Activated CD4-positive, alpha-beta T cell treated with anti-CD3 and anti-CD28 coated beads, Interleukin-2, amount 10 ng/mL, durations not matched to agents 24 days and 14 days (primary cell): ENCODE measurements at regions of chr6 and their contacts with region 1.

Region 1: DNA sequence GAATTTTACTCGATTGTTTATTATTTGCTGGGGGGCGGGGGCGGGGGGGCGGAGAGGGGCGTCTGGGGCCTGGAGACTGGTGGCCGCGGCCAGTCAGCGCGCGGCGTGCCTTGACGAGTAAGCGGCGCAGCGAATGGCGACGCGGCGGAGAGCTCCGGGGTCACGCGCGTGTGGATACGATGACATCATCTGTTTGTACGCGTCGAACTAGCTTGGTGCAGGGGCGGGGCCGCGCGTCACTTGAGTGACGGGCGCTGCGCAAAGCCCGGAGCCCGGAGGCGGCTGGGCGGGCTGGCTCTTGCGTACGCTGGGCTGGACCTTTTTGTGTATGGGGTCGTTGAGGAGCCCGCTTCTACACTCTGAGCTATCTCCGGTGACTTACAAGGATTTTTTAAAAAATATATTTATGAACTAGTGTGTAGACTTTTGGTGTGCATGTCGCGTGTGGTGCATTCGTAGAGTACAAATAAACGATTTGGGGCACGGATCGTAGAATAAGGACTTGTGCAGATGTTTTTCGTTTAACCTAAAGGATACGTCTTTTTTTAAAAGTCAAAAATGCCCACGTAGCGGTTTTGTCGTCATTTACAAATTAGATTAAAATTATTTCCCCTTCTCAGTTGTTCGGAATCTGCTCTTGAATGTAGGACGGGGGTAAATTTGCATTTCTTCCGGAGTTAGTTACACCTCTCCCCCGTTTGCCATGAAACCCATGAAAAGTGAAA is 2.2 kb upstream of the FOXO3 start:
- DNase-seq: peak; percentile 99
- H3K4me3 Mint-ChIP-seq: peak overlapping the region; percentile 88
- H3K27ac Mint-ChIP-seq: peak overlapping the region; percentile 93
- H3K4me1 Mint-ChIP-seq: peaks cover 19% of the 10 kb centered on the region
- H3K27me3 Mint-ChIP-seq: peaks cover 44% of the 10 kb centered on the region

Region 2: DNA sequence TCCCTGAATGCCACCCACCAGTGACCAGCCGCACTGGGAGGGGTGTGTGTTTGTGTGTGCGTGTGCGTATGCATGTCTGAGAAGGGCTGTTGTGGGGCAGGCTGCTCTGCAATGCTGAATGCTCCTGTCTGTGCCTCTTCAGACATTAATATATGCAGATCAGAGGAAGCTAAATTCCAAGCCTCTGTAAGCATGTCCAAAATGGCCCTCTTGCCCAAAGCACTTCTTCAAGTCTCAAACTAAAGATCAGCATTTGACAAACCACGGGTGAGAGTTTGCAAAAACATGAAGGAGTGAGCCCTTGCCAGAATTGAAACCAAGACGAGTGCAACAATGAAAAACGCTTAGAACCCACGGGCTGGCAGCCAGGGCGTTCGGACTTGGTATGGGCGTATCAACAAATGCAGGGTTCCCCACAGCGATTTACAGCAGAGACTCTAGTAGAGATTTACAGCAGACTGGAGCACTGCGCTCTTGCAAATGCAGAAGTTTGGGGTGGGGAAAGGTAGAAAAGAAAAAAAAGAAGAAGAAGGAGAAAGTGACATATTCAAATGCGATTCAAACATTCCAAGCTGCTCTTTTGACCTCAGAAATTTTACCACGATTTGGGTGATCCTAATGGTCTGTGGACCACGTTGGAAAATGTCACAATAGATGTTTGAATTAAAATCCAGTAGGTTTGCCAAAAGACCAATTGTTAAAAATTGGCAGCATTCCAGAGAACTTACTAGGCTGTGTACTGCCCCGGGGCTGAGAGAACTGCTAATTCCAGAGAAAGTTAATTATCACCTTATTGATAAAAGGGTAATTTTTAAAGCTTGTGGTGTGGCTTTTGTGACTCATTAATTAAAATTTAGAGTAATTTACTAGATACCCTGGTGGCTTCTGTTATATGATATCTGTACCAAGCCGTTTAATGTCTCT is 737.9 kb before region 1 on chr6:
- intact Hi-C with region 1: loop called (anchors 5 kb)
- DNase-seq: peak; percentile 86
- H3K4me3 Mint-ChIP-seq: peak overlapping the region; percentile 80
- H3K27ac Mint-ChIP-seq: peak overlapping the region; percentile 95
- H3K4me1 Mint-ChIP-seq: peaks cover 82% of the 10 kb centered on the region
- H3K27me3 Mint-ChIP-seq: no peaks in the 10 kb centered on the region

Region 3: DNA sequence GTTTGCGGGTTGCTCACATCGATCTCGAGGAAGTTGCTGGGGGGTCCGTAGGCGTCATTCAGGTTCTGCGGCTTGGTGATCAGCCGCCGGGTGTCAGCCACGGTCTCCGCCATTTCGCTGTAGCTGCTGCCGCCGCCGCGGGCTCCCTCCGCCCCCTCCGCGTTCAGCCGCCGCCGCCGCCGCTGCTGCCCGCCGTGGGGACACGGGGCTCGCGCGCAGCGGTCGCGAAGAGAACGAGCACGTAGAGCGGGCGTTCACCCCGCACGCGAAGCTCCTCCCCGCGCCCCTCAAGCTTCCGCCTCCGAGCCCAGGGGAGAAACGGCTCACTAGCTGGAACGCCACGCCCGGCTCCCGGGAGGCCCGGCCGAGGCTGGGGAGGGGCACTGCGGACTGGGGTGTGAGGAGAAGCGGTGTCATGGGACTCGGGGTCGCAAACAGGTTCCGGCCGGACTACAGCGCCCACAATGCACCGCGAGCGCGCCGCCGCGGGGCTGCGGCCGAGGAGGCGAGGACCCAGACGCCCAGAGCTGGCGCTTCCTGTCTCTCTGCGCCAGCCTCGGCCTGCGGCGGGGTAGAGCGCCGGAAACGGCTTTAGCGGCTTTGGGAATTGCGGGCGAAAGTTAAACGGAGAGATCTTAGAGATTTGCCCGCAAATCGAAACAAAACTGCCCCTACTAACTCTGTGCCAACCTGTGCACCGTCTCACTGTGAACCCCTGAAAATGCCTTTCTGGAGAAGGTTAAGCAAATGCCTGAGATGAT is 297.5 kb before region 1 on chr6 and contains the start of gene SNX3:
- intact Hi-C with region 1: loop called (anchors 1 kb)
- DNase-seq: peak; percentile 97
- H3K4me3 Mint-ChIP-seq: peak within 1 kb of the TSS; percentile 86
- H3K27ac Mint-ChIP-seq: peak within 1 kb of the TSS; percentile 89
- H3K4me1 Mint-ChIP-seq: peaks cover 18% of the 10 kb centered on the region
- H3K27me3 Mint-ChIP-seq: peaks cover 9% of the 10 kb centered on the region
- total RNA-seq, gene SNX3: 75.1 and 78.0 TPM in 2 replicates

Region 4: DNA sequence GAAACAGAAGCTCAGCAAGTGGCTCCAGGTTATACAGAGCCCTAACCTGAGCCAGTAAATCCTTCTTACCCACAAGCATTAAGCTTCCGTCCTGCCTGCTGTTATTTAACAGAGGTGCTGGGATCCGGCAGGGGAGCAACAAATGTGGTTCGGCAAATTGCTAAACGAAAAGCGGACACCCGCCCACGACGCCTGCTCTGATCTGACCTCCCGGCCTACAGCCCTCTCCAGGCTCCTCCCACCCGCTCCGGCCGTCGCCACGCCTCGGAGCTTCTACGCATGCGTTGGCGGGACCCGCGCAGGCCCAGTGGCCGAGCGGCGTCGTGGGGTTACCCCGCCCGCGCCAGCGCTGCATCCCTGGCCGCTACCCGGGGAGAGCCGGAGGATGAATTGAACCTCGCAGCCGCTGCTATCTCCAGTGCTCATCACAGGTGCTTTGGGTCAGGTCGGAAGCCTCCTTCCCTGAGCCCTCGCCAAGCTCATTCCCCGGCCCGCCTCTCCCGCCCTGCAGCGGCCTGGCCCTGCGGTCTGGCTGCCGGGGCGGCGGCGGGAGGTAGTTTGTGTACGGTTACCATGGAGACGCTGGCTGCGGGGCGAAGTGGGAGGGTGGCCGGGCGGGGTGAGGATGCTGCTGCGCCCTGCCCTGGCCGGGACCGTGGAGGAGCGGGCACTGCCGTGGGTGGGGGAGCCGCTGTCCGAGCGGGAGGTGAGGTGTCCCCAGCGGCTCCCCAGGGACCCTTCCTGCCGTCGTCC is 289.8 kb after region 1 on chr6 and contains the start of gene ARMC2:
- intact Hi-C with region 1: loop called (anchors 1 kb)
- DNase-seq: peak; percentile 97
- H3K4me3 Mint-ChIP-seq: peak within 1 kb of the TSS; percentile 85
- H3K27ac Mint-ChIP-seq: peak within 1 kb of the TSS; percentile 74
- H3K4me1 Mint-ChIP-seq: peaks cover 19% of the 10 kb centered on the region
- H3K27me3 Mint-ChIP-seq: peaks cover 21% of the 10 kb centered on the region
- total RNA-seq, gene ARMC2: 2.7 and 3.3 TPM in 2 replicates

Region 5: GRCh38 chr6:108896111-108896661 is 337.7 kb after region 1 on chr6:
- intact Hi-C with region 1: loop called (anchors 5 kb)
- DNase-seq: peak; percentile 74
- H3K4me3 Mint-ChIP-seq: peak overlapping the region; percentile 66
- H3K27ac Mint-ChIP-seq: peak overlapping the region; percentile 92
- H3K4me1 Mint-ChIP-seq: peaks cover 37% of the 10 kb centered on the region
- H3K27me3 Mint-ChIP-seq: peaks cover 4% of the 10 kb centered on the region

Region 6: DNA sequence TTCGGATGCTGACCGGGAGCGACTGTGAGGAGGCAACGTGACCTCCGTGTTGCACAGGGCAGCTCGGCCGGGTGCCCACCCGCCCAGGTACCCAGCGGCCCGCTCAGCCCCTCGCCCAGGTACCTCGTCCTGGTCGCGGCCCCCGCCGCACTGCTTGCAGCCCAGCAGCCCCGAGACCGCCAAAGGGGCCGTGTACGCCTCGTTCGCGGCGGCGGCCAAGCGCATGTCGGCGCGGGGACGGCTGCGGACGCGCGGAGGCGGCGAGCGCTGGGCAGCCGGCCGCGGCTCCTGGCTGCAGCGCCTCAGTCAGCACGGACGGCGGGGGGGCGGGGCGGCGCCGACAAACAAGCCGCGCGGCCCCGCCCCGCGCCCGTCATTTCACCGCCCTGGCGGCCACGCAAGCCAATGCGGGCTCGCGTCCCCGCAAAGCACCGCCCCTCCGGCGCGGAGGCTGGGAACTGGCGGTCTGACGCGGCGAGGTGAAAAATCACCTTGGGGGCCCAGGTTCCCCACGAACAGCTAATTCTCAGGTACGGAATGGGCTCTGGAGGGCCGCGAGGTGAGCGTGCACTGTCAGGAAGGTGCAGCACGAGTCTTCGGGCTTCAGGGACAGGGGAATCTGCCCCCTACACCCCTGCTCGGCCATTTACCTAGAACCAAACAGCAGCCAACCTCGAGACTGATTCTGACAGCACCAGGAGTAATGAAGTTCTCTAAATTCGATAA is 450.9 kb after region 1 on chr6:
- intact Hi-C with region 1: loop called (anchors 2 kb)
- DNase-seq: peak; percentile 98
- H3K4me3 Mint-ChIP-seq: peak overlapping the region; percentile 93
- H3K27ac Mint-ChIP-seq: peak overlapping the region; percentile 92
- H3K4me1 Mint-ChIP-seq: peaks cover 35% of the 10 kb centered on the region
- H3K27me3 Mint-ChIP-seq: peaks cover 2% of the 10 kb centered on the region

Region 7: DNA sequence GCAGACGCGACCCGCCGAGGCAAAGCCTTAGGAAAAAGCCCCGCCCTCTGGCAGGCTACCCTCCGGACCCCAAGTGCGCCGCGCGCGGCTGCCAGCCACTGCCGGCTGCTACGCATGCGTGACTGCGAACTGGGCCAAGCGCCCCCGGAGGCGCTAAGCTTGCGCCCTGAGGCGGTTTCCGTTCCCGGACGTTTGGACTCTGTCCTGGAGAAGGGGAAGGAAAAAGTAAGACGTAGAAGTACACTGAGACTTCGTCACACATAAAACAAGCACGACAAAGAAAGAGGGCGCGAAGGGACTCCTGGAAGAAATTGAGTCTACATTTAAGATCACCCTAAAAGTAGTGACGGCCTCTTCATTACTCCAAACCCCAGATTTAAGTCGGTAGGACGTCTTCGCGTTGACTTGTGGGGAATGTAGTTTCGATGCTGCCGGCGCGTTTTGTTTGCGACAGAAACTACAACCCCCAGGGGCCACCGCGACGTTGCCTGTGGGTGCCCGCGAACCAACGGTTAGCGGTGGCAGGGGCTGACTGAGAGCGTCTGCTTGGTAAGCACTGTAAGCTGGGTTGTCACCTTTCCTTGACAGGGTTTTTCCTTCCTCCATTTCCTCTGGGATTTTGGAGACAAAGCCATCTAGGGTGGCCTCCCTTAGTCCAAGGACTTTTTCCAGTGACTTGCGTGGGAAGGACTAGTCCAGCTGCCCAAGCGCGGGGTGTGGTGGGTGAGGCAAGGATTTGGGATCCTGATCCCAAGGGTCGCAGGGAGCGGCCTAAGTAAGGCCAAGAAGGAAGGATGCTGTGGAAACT is 536.7 kb after region 1 on chr6 and contains the start of gene CEP57L1:
- intact Hi-C with region 1: loop called (anchors 1 kb)
- DNase-seq: peak; percentile 98
- H3K4me3 Mint-ChIP-seq: peak within 1 kb of the TSS; percentile 90
- H3K27ac Mint-ChIP-seq: peak within 1 kb of the TSS; percentile 100
- H3K4me1 Mint-ChIP-seq: peaks cover 53% of the 10 kb centered on the region
- H3K27me3 Mint-ChIP-seq: no peaks in the 10 kb centered on the region
- total RNA-seq, gene CEP57L1: 14.2 and 15.3 TPM in 2 replicates

Region 8: DNA sequence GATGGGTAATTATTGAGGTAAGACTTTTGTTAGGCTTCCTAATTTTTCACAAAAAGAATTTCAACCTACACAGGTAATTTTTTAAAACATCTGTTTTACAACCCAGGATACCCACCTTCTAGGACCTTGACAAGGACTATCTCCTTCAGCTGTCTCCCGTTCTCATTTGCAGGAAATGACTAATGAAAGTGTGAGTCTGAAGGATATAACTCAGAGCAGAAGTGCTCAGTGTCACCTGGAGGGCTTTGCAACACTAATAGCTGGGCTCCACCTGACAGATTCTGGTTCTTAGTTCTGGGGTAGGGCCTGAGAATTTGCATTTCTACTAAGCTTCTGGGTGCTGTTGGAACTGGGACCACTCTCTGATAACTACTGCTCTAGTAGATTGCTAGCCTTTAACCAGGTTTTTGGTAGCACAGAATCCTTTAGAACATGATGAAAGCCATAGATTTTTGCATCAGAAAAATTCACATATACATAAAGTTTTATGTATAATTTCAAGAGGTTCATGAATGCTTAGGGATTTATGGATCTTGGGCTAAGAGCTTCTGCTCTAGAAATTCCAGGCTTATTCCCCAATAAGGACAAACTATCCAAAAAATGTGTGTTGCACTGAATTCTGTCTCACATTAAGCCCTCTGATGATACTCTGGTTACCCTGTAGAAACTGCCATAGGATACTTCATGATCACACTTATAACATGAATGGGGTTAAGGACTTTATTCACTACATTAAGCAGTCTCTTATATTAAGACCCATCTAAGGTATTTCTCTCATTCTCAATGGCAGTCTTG is 1102.2 kb after region 1 on chr6:
- intact Hi-C with region 1: no loop called
- DNase-seq: no peak
- H3K4me3 Mint-ChIP-seq: no peak overlapping the region
- H3K27ac Mint-ChIP-seq: no peak overlapping the region
- H3K4me1 Mint-ChIP-seq: peaks cover 6% of the 10 kb centered on the region
- H3K27me3 Mint-ChIP-seq: no peaks in the 10 kb centered on the region